ENCODE measurements at regions of chr11 and their contacts with region 1.

Region 1: DNA sequence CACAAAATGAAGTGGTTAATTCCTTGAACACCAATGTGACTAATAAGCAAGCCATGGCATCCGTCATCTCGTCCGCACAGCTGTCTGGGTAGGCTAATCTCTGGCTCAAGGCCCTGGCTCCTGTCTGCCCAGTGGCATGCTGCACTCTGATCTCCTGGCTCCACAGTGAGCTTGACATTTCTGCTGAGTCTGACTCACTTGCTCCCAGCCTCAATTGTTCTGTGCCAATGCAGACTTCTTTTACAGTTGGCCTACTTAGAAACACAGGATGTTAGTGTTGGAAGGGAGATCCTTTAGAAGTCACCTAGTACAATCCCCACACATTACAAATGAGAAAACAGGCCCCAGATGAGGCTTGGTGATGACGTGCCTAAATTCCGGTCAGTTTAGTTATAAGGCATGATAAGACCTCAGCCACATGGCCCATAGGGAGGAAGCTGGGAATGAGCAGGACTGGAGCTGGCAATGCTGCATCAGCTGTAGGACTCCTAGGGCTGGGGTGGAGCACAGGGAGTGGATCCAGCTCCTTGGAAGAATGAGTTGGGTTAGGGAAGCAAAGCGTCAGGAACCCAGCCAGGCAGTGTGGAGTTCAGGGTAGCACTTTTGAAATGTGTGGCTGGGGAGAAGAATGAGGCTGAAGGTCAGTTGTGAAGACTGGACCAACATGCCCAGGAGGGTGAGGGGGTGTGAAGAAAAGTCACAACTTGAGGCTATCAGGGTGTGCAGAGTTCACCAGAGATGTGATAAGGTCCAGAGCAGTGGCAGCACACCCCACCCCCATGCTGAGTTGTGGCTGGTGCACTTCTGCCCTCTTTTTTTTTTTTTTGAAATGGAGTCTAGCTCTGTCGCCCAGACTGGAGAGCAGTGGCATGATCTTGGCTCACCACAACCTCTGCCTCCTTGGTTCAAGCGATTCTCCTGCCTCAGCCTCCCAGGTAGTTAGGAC is 70.2 kb upstream of the EED start:
- DNase-seq: peak; percentile 36
- H3K4me3 Mint-ChIP-seq: no peak overlapping the region
- H3K27ac Mint-ChIP-seq: no peak overlapping the region
- H3K4me1 Mint-ChIP-seq: peaks cover 28% of the 10 kb centered on the region
- H3K27me3 Mint-ChIP-seq: no peaks in the 10 kb centered on the region

Region 2: GRCh38 chr11:86041975-86042378 is 132.4 kb before region 1 on chr11:
- CTCF ChIA-PET with region 1: interaction called, 10 read pairs
- POLR2A ChIA-PET with region 1: no interaction called
- intact Hi-C with region 1: loop called (anchors 1 kb)
- DNase-seq: peak; percentile 48
- H3K4me3 Mint-ChIP-seq: no peak overlapping the region
- H3K27ac Mint-ChIP-seq: peak overlapping the region; percentile 58
- H3K4me1 Mint-ChIP-seq: peaks cover 71% of the 10 kb centered on the region
- H3K27me3 Mint-ChIP-seq: no peaks in the 10 kb centered on the region

Region 3: GRCh38 chr11:86116386-86116726 is 58.0 kb before region 1 on chr11:
- CTCF ChIA-PET with region 1: interaction called, 4 read pairs
- POLR2A ChIA-PET with region 1: no interaction called
- intact Hi-C with region 1: loop called (anchors 5 kb)
- DNase-seq: peak; percentile 59
- H3K4me3 Mint-ChIP-seq: peak overlapping the region; percentile 40
- H3K27ac Mint-ChIP-seq: peak overlapping the region; percentile 44
- H3K4me1 Mint-ChIP-seq: peaks cover 34% of the 10 kb centered on the region
- H3K27me3 Mint-ChIP-seq: peaks cover 2% of the 10 kb centered on the region

Region 4: DNA sequence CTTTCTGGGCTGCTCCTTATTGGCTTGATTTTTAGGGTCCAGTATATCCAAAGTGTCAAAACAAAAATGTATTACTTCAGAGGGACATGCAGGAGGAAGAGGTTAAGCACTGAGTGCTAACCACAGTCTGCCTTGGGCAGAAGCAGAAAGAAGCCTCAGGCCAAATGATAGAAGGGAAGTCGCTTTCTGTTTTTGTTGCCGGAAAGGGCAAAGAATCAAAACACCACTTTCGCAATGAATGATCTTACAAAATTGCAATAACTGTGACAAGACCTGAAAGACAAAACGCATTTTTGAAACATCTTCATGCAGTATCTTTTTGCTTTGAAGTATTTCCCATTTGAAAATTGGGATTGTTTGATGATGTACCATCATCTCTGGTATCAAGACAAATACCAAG is 35.4 kb before region 1 on chr11:
- CTCF ChIA-PET with region 1: no interaction called
- POLR2A ChIA-PET with region 1: no interaction called
- intact Hi-C with region 1: loop called (anchors 1 kb)
- DNase-seq: peak; percentile 61
- H3K4me3 Mint-ChIP-seq: peak overlapping the region; percentile 20
- H3K27ac Mint-ChIP-seq: peak overlapping the region; percentile 70
- H3K4me1 Mint-ChIP-seq: peaks cover 45% of the 10 kb centered on the region
- H3K27me3 Mint-ChIP-seq: no peaks in the 10 kb centered on the region

Region 5: GRCh38 chr11:86156381-86156955 is 17.9 kb before region 1 on chr11:
- CTCF ChIA-PET with region 1: no interaction called
- POLR2A ChIA-PET with region 1: no interaction called
- intact Hi-C with region 1: no loop called
- DNase-seq: no peak
- H3K4me3 Mint-ChIP-seq: no peak overlapping the region
- H3K27ac Mint-ChIP-seq: no peak overlapping the region
- H3K4me1 Mint-ChIP-seq: peaks cover 13% of the 10 kb centered on the region
- H3K27me3 Mint-ChIP-seq: no peaks in the 10 kb centered on the region

Region 6: DNA sequence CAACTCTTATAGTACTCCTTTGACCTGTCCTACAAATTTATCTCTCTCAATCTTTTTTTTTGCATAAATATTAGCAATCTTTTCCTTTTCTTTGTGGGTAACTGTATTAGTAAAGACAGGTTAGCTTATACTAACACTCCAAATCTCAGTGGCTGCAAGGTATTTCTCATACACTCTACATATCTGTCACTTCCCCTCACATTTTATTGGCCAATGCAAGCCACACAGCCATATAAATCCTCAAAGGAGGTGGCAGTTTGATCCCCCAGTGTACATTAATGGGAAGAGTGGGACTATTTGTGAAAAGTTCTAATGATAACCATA is 27.6 kb after region 1 on chr11:
- CTCF ChIA-PET with region 1: no interaction called
- POLR2A ChIA-PET with region 1: interaction called, 3 read pairs
- intact Hi-C with region 1: loop called (anchors 1 kb)
- DNase-seq: peak; percentile 38
- H3K4me3 Mint-ChIP-seq: no peak overlapping the region
- H3K27ac Mint-ChIP-seq: no peak overlapping the region
- H3K4me1 Mint-ChIP-seq: peaks cover 5% of the 10 kb centered on the region
- H3K27me3 Mint-ChIP-seq: no peaks in the 10 kb centered on the region

Measured in activated CD4-positive, alpha-beta memory T cell treated with anti-CD3 and anti-CD28 coated beads for 36 hours (primary cell).